ENCODE measurements at regions of chr11 and their contacts with region 1.

Region 1: GRCh38 chr11:86632499-86633269 is 39.7 kb downstream of the ME3 start:
- DNase-seq: peak; percentile 83 to 85
- ATAC-seq: no peak
- H3K4me3 ChIP-seq: no peak overlapping the region
- H3K27ac ChIP-seq: no peak overlapping the region
- H3K4me1 ChIP-seq: peaks cover 6 to 7% of the 10 kb centered on the region in 2 donors
- H3K27me3 ChIP-seq: no peaks in the 10 kb centered on the region

Region 2: GRCh38 chr11:86477495-86478155 is 155.1 kb before region 1 on chr11:
- intact Hi-C with region 1: no loop called
- DNase-seq: peak in 1 of 2 donors; percentile 59
- ATAC-seq: peak; percentile 50
- H3K4me3 ChIP-seq: no peak overlapping the region
- H3K27ac ChIP-seq: peak overlapping the region in 1 of 2 donors; percentile 17
- H3K4me1 ChIP-seq: peaks cover 0 to 6% of the 10 kb centered on the region in 2 donors
- H3K27me3 ChIP-seq: no peaks in the 10 kb centered on the region

Region 3: GRCh38 chr11:86559311-86559945 is 73.3 kb before region 1 on chr11:
- intact Hi-C with region 1: no loop called
- DNase-seq: no peak
- ATAC-seq: peak; percentile 29
- H3K4me3 ChIP-seq: no peak overlapping the region
- H3K27ac ChIP-seq: no peak overlapping the region
- H3K4me1 ChIP-seq: no peaks in the 10 kb centered on the region
- H3K27me3 ChIP-seq: no peaks in the 10 kb centered on the region

Region 4: GRCh38 chr11:86671682-86672621 is 39.3 kb after region 1 on chr11 and contains the start of gene ME3:
- intact Hi-C with region 1: loop called in 1 of 2 experiments (anchors 5 kb)
- DNase-seq: peak; percentile 85 to 93
- ATAC-seq: peak; percentile 86
- H3K4me3 ChIP-seq: peak within 1 kb of the TSS; percentile 56 to 57
- H3K27ac ChIP-seq: peak within 1 kb of the TSS; percentile 50 to 92
- H3K4me1 ChIP-seq: peaks cover 0 to 3% of the 10 kb centered on the region in 2 donors
- H3K27me3 ChIP-seq: no peaks in the 10 kb centered on the region
- total RNA-seq, gene ME3: 27.7 to 29.4 TPM

Region 5: DNA sequence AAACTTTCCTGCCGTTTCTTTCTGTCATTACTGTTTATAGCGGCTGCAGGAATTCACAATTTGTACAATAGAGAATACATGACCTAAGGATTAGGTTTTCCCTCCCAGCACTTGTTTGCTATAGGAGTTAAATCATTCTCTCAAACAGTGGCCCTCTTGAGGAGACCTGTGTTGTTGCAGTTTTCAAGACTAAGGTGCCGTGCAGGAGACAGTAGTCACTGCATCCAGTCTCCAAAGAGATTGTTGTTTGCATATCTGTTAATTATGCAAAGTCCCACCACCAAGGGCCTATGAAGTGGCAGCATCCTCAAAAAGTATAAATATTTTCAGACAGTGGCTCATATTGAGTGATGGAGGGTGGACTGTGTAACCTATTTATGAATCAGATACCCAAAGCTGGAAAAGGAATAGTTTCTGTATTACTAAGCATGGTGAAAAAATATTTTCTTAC is 169.9 kb after region 1 on chr11:
- intact Hi-C with region 1: loop called in 1 of 2 experiments (anchors 5 kb)
- DNase-seq: no peak
- ATAC-seq: no peak
- H3K4me3 ChIP-seq: peak overlapping the region in 1 of 2 donors; percentile 75
- H3K27ac ChIP-seq: peak overlapping the region in 1 of 2 donors; percentile 17
- H3K4me1 ChIP-seq: peaks cover 0 to 4% of the 10 kb centered on the region in 2 donors
- H3K27me3 ChIP-seq: no peaks in the 10 kb centered on the region

Region 6: GRCh38 chr11:86818466-86819192 is 185.9 kb after region 1 on chr11:
- intact Hi-C with region 1: loop called in 1 of 2 experiments (anchors 5 kb)
- DNase-seq: no peak
- ATAC-seq: peak; percentile 66
- H3K4me3 ChIP-seq: no peak overlapping the region
- H3K27ac ChIP-seq: no peak overlapping the region
- H3K4me1 ChIP-seq: peaks cover 3 to 8% of the 10 kb centered on the region in 2 donors
- H3K27me3 ChIP-seq: no peaks in the 10 kb centered on the region